ENCODE measurements at regions of chr4 and their contacts with region 1.

Region 1: DNA sequence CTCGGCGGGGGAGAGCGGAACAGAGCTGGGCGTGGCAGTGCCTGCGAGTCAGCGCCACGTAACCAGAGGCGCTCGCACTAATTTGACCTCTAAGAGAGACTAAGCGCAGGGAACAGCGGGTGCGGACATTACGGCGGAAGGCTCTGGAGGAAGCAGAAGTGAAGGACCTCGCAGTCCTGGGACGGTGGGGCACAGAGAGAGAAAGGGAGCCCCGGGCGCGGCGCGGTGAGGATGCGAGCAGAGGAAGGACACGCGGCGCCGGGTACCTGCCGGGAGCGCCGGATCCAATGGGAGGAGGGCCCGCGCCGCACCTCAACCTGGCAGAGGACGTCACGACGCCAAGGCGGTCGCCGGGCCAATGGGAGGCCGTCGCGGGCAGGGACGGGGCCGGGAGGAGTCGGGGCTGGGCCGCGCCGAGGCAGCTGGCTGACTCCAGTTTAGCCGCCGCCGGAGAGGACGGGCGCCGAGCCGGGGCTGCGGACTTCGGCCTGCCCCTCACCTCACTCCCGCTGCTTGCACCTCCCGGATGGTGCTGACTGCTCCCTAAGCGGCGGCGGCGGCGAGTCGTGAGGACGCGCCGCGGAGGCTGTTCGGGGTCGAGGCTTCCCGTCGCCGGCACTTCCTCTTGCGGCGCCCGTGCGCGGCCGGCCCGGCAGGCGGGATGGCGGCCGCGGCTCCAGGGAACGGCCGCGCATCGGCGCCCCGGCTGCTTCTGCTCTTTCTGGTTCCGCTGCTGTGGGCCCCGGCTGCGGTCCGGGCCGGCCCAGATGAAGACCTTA is at the start of gene TMEM165:
- DNase-seq: peak; percentile 77
- ATAC-seq: peak; percentile 97
- H3K4me3 ChIP-seq: peak within 1 kb of the TSS; percentile 80 to 92
- H3K27ac ChIP-seq: peak within 1 kb of the TSS; percentile 90
- H3K4me1 ChIP-seq: peaks cover 18 to 29% of the 10 kb centered on the region in 2 experiments
- H3K27me3 ChIP-seq: no peaks in the 10 kb centered on the region
- CTCF ChIP-seq: no peak
- POLR2A ChIP-seq: peak; percentile 76
- RAD21 ChIP-seq: no peak
- total RNA-seq, gene TMEM165: 60.7 TPM

Region 2: GRCh38 chr4:55012363-55013230 is 383.1 kb before region 1 on chr4:
- CTCF ChIA-PET with region 1: no interaction called
- POLR2A ChIA-PET with region 1: no interaction called
- RAD21 ChIA-PET with region 1: no interaction called
- intact Hi-C with region 1: no loop called
- DNase-seq: no peak
- ATAC-seq: no peak
- H3K4me3 ChIP-seq: no peak overlapping the region
- H3K27ac ChIP-seq: no peak overlapping the region
- H3K4me1 ChIP-seq: no peaks in the 10 kb centered on the region
- H3K27me3 ChIP-seq: no peaks in the 10 kb centered on the region
- CTCF ChIP-seq: no peak
- POLR2A ChIP-seq: no peak
- RAD21 ChIP-seq: no peak

Region 3: DNA sequence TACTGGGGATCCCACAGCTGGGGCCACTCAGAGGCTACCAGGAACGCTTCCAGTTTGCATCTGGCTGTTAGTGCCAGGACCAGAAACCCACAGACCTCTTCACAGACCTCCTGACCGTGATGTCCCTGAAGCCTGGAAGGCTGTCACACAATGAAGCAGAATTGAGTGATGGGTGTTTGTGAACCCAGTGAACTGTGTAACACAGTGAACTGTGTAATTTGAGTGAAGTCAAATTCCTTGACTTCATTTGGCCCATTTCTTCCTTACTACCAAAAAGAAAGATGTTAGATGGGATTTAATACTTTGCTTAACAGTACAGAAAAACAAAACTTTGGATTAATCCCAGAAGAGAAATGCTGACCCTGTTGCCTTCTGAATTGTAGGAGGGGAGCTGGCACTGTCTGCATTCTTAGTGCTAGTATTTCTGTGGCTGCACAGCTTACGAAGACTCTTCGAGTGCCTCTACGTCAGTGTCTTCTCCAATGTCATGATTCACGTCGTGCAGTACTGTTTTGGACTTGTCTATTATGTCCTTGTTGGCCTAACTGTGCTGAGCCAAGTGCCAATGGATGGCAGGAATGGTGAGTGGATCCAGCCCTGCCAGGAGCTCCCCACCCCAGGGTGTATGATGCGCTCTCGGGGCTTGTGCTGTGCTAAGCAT is 31.9 kb before region 1 on chr4:
- CTCF ChIA-PET with region 1: interaction called, 3 read pairs
- POLR2A ChIA-PET with region 1: interaction called, 3 read pairs
- RAD21 ChIA-PET with region 1: no interaction called
- intact Hi-C with region 1: loop called (anchors 2 kb)
- DNase-seq: no peak
- ATAC-seq: no peak
- H3K4me3 ChIP-seq: no peak overlapping the region
- H3K27ac ChIP-seq: no peak overlapping the region
- H3K4me1 ChIP-seq: peaks cover 24 to 43% of the 10 kb centered on the region in 2 experiments
- H3K27me3 ChIP-seq: no peaks in the 10 kb centered on the region
- CTCF ChIP-seq: no peak
- POLR2A ChIP-seq: no peak
- RAD21 ChIP-seq: no peak

Measured in HCT116 (cell line).